ENCODE measurements at regions of chr4 and their contacts with region 1.

Region 1: DNA sequence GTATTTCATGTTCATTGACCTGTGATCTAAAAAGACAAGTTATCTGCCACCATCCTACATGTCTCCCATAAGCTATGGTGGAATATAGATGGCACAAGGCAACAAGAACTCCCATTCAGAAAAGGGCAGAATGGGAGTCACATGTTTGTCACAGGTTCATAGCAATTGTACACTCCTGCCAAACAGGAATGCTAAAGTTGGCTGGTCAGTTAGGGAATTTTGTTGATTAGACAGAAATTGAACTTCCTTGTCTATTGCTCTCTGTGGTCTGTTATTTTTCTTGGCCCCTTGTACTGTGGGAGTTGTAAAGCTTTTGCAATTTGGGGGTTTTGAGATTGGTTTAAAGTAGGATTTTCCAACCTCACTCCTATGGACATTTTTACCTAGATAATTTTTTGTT is 101.7 kb upstream of the SOD3 start:
- DNase-seq: no peak
- H3K4me3 ChIP-seq: no peak overlapping the region
- H3K27ac ChIP-seq: no peak overlapping the region
- H3K4me1 ChIP-seq: peaks cover 0 to 6% (median 2%) of the 10 kb centered on the region in 4 donors
- H3K27me3 ChIP-seq: no peaks in the 10 kb centered on the region
- CTCF ChIP-seq: no peak
- EP300 ChIP-seq: no peak
- POLR2A ChIP-seq: no peak

Region 2: DNA sequence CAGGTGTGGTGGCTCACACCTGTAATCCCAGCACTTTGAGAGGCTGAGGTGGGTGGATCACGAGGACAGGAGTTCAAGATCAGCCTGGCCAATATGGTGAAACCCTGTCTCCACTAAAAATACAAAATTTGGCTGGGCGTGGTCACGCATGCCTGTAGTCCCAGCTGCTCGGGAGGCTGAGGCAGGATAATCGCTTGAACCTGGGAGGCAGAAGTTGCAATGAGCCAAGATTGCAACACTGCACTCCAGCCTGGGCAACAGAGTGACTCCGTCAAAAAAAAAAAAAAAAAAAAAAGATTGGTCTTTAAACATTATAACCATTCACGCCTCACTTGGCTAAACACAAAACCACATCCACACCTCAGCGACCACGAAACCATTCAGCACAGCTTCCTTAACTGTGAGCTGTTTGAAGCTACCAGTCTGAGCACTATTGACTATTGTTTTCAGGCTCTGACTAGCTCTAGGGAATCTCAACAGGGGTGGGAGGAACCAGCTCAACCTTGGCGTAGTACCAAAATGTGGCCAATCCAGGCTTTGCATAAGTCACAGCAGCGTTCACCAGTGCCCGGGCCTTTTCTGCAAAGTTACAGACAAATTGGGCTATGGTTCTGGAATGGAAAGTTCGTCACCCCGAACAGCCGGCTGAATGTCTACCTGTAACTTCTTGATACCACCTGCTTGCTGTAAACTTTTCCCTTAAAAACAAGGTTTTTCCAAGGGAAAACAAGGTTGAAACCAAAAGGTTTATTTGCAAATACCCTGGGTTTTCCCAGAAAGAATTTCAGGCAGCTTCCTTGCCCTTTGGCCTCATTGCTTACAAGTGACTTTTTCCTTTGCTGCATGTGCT is 35.6 kb before region 1 on chr4:
- intact Hi-C with region 1: loop called (anchors 2 kb)
- DNase-seq: no peak
- H3K4me3 ChIP-seq: no peak overlapping the region
- H3K27ac ChIP-seq: no peak overlapping the region
- H3K4me1 ChIP-seq: peaks cover 0 to 15% (median 8%) of the 10 kb centered on the region in 4 donors
- H3K27me3 ChIP-seq: no peaks in the 10 kb centered on the region
- CTCF ChIP-seq: no peak
- EP300 ChIP-seq: no peak
- POLR2A ChIP-seq: no peak

Region 3: DNA sequence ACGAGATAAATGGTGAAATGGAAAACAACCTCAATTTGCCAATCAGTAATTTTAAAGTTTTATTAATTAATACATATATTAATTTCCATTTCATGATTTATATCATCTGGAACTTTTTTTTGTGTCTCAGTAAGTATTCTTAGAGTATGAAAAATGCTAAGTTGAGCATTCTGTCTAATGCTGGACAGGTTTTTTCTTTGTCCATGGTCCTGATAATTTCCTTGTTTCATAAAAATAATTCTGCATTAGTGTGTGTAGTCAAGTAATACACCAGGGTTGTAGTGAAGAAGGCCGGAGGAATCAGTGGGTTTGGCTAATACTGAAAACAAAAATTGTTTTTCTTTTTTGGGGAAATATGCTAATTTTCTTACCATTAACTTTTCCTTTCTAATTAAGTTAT is 693.3 kb after region 1 on chr4:
- intact Hi-C with region 1: no loop called
- DNase-seq: no peak
- H3K4me3 ChIP-seq: no peak overlapping the region
- H3K27ac ChIP-seq: no peak overlapping the region
- H3K4me1 ChIP-seq: no peaks in the 10 kb centered on the region
- H3K27me3 ChIP-seq: no peaks in the 10 kb centered on the region
- CTCF ChIP-seq: no peak
- EP300 ChIP-seq: no peak
- POLR2A ChIP-seq: no peak

Measured in esophagus muscularis mucosa (tissue), 4 donors.